ENCODE measurements at regions of chr12 and their contacts with region 1.

Region 1: DNA sequence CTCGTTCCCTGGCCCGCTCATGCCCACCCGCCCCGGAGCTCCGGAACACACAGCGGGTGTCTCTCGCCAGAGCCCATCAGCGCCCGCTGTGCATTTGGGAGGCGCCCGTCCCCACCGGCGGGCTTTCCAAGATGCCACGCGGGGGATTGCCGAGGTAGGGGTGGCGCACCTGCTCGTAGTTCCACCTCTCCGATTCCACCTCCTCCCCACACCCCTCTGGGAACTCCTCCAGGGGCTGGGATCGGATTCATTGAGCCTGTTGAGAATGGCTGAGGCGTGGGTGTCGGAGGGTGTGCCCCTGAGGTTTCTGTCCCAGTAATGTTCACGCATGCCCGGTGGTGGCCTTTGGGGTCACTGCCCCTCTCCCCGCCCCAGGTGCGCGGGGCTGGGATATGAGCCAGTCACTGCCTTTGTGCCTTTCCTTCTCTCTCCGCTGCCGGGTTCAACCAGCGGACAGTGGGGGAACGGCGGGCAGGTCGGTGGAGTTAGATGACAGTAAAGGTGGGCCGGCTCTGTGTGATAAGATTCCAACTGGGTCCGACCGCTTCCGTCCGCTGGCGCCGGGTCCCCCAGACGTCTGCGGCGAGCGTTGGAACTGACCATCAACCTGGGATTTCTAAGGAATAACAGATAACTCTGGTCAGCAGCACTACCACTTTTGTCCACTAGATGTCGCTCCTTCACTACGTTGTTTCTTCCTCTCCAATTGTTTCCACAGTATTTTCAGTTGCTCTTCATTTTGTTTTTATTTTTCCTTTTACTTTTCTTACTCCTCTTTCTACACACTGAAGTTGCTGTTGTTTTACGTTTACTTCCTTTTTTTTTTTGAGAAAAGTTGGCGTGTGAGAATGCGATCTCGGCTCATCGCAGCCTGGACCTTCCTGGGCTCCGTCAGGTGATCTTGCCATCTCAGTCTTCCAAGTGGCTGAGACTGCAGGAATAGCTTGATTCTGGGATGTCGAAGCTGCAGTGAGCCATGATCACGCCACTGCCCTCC is 178.1 kb upstream of the ALG10B start:
- DNase-seq: no peak
- ATAC-seq: peak; percentile 54
- H3K4me3 Mint-ChIP-seq: peak overlapping the region; percentile 42
- H3K27ac Mint-ChIP-seq: no peak overlapping the region
- H3K4me1 Mint-ChIP-seq: peaks cover 8% of the 10 kb centered on the region
- H3K27me3 Mint-ChIP-seq: peaks cover 6% of the 10 kb centered on the region
- CTCF ChIP-seq: peak; percentile 72

Region 2: GRCh38 chr12:38102197-38102596 is 36.3 kb before region 1 on chr12:
- CTCF ChIA-PET with region 1: no interaction called
- POLR2A ChIA-PET with region 1: no interaction called
- intact Hi-C with region 1: no loop called
- DNase-seq: no peak
- ATAC-seq: no peak
- H3K4me3 Mint-ChIP-seq: no peak overlapping the region
- H3K27ac Mint-ChIP-seq: no peak overlapping the region
- H3K4me1 Mint-ChIP-seq: no peaks in the 10 kb centered on the region
- H3K27me3 Mint-ChIP-seq: no peaks in the 10 kb centered on the region
- CTCF ChIP-seq: no peak

Region 3: DNA sequence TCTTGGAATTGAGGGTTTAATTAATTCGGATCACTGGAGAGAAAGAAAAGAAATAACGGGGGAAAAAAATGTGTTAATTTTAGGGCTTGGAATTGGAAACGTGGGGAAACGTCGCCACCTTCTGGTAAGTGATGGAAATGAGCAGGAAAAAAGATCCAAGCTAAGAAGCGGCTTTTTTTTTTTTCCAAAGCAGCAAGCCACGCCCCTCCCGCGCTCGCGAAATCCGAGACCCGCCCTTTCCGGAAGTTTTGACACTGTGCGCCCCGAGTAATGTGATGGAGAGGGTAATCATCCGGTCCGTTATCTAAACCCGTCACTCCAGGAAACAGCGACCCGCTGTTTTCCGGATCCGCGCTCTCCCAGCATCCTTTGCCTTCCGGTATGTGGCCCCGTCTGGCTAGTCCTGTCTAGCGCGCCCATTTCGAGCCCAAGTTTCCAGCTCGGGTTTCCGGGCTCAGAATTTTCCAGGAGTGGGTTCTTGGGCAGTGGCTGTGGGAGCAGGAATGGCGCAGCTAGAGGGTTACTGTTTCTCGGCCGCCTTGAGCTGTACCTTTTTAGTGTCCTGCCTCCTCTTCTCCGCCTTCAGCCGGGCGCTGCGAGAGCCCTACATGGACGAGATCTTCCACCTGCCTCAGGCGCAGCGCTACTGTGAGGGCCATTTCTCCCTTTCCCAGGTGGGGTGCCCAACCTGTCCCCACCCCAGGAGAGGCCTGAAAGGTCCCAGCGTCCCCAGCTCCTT is 178.0 kb after region 1 on chr12 and contains the start of gene ALG10B:
- CTCF ChIA-PET with region 1: interaction called, 4 read pairs
- POLR2A ChIA-PET with region 1: interaction called, 3 read pairs
- intact Hi-C with region 1: loop called (anchors 1 kb)
- DNase-seq: peak; percentile 85
- ATAC-seq: peak; percentile 97
- H3K4me3 Mint-ChIP-seq: peak within 1 kb of the TSS; percentile 92
- H3K27ac Mint-ChIP-seq: peak within 1 kb of the TSS; percentile 87
- H3K4me1 Mint-ChIP-seq: peaks cover 15% of the 10 kb centered on the region
- H3K27me3 Mint-ChIP-seq: no peaks in the 10 kb centered on the region
- CTCF ChIP-seq: no peak
- total RNA-seq, gene ALG10B: 9.3 and 9.8 TPM in 2 replicates